ENCODE measurements at regions of chr5 and their contacts with region 1.

Region 1: GRCh38 chr5:41869739-41870626 is at the start of gene OXCT1:
- DNase-seq: peak; percentile 54 to 81
- H3K4me3 ChIP-seq: peak within 1 kb of the TSS; percentile 61 to 86 (median 80)
- H3K27ac ChIP-seq: no peak within 1 kb of the TSS
- H3K4me1 ChIP-seq: peaks cover 0 to 10% (median 3%) of the 10 kb centered on the region in 4 experiments; a peak in 4 of 7 replicates
- H3K27me3 ChIP-seq: peaks cover 0 to 24% (median 8%) of the 10 kb centered on the region in 4 experiments; a peak in 5 of 7 replicates
- CTCF ChIP-seq: no peak
- EP300 ChIP-seq: no peak
- POLR2A ChIP-seq: peak; percentile 90 to 92
- RAD21 ChIP-seq: 0 out of 4 replicates have a peak, but pooled peaks of 1 of the 2 experiments have one; percentile 0
- total RNA-seq, gene OXCT1: 25.8 and 28.2 TPM in 2 replicates

Region 2: DNA sequence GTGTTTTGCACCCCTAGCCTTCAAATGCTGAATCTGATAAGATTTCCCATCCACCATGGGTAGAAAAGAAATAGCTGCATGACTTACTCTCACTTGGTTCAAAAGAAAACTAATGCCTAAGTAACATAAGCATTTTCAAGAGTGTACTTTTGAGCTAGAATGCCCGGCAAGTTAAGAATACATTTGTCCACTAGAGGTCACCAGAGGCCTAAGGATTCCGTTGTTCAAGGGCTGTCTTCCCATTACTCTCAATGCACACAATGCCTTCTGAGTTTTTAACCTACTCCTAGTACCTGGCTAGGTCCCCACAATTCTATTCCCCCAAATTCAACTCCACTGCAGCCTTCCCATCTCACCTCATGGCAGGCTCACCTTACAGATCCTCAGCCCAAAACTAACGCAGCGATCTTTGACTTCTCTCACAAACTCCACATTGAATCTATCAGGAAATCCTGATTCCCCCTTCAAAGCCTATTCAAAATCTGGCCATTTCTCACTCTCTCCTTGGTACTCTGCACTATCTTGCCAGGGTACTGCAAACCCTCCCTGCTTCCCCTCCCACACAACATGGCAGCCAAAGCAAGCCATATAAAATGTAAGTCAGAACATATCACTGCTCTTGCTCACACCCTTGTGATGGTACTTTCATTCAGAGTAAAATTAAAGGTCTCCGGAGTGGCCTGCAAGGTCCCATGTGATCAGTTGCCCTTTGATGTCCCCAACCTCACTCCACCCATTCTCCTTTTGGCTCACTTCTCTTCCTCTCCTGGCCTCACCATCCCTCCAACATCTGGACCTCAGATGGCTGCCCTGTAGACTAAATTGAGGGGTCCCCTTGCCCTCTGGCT is 13.1 kb before region 1 on chr5:
- CTCF ChIA-PET with region 1: interaction called, 22 read pairs
- POLR2A ChIA-PET with region 1: interaction called, 5 read pairs
- DNase-seq: peak in 1 of 2 experiments; percentile 60
- H3K4me3 ChIP-seq: no peak overlapping the region
- H3K27ac ChIP-seq: no peak overlapping the region
- H3K4me1 ChIP-seq: no peaks in the 10 kb centered on the region
- H3K27me3 ChIP-seq: peaks cover 0 to 2% (median 0%) of the 10 kb centered on the region in 4 experiments; a peak in 1 of 7 replicates
- CTCF ChIP-seq: peak in 2 of 3 experiments; percentile 70 to 73; a peak in 3 of 4 replicates
- EP300 ChIP-seq: no peak
- POLR2A ChIP-seq: no peak
- RAD21 ChIP-seq: peak; percentile 90 to 91

Region 3: DNA sequence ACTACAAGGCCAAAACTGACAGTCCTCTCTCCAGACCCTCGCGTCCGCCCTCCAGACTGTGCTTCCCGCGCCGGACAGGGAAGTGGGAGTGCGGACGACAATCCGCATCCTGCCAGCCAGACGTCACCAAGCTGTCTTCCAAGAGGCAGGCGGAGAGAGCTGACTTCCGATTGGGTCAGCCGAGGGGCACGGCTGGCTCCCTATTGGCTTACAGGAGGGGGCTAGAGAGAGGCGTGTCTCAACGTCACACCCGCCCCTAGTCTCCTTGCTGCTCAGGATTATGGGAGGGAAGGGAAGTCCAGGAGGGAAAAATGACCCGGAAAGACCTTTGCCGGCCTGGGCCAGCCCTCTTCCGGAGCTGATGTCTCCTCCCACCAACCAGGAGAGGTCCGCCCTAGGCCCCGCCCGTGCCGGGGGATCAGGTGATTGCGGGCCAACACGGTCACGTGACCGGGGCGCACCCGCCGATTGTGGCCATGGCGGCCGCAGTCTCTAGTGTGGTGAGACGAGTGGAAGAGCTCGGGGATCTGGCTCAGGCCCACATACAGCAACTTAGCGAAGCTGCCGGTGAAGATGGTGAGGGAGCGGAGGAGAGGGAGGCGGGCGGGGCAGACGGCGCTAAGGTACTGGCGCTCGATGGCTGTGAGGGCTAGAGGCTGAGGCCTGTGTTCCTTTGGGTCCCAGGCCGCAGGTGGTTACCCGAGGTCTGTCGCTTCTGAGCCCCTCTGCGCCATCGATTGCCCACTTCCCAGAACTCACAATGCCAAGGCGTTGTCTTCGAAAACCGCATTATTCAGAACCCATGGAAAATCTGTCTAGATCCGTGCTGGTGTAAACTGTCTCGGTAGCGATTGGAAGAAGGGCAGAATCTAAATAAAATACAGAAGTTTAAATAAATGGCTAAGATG is 34.2 kb after region 1 on chr5 and contains the start of gene RIMOC1:
- CTCF ChIA-PET with region 1: interaction called, 3 read pairs
- POLR2A ChIA-PET with region 1: interaction called, 17 read pairs
- DNase-seq: peak; percentile 96 to 97
- H3K4me3 ChIP-seq: peak within 1 kb of the TSS; percentile 91 to 98 (median 94)
- H3K27ac ChIP-seq: peak within 1 kb of the TSS; percentile 92
- H3K4me1 ChIP-seq: no peaks in the 10 kb centered on the region; a peak in 1 of 7 replicates
- H3K27me3 ChIP-seq: no peaks in the 10 kb centered on the region; a peak in 1 of 7 replicates
- CTCF ChIP-seq: no peak
- EP300 ChIP-seq: peak in 1 of 2 experiments; percentile 22; a peak in 1 of 3 replicates
- POLR2A ChIP-seq: peak in 1 of 2 experiments; percentile 93; a peak in 2 of 3 replicates
- RAD21 ChIP-seq: no peak
- total RNA-seq, gene RIMOC1: 33.4 and 35.1 TPM in 2 replicates